ENCODE measurements at regions of chr3 and their contacts with region 1.

Region 1: GRCh38 chr3:56825567-56826438 is 24.1 kb upstream of the ARHGEF3 start:
- DNase-seq: no peak
- H3K4me3 ChIP-seq: no peak overlapping the region
- H3K4me3 Mint-ChIP-seq: peak overlapping the region in 2 of 8 donors; percentile 9 to 22
- H3K27ac ChIP-seq: no peak overlapping the region
- H3K27ac Mint-ChIP-seq: peak overlapping the region; percentile 0 to 88 (median 72)
- H3K4me1 ChIP-seq: peaks cover 45% of the 10 kb centered on the region
- H3K4me1 Mint-ChIP-seq: peaks cover 45 to 81% (median 47%) of the 10 kb centered on the region in 4 donors
- H3K27me3 ChIP-seq: no peaks in the 10 kb centered on the region
- H3K27me3 Mint-ChIP-seq: no peaks in the 10 kb centered on the region

Region 2: GRCh38 chr3:56629047-56629446 is 196.8 kb before region 1 on chr3:
- CTCF ChIA-PET with region 1: no interaction called
- POLR2A ChIA-PET with region 1: no interaction called
- intact Hi-C with region 1: no loop called
- DNase-seq: no peak
- H3K4me3 ChIP-seq: no peak overlapping the region
- H3K4me3 Mint-ChIP-seq: no peak overlapping the region
- H3K27ac ChIP-seq: no peak overlapping the region
- H3K27ac Mint-ChIP-seq: peak overlapping the region; percentile 57 to 81 (median 78)
- H3K4me1 ChIP-seq: no peaks in the 10 kb centered on the region
- H3K4me1 Mint-ChIP-seq: peaks cover 0 to 12% (median 5%) of the 10 kb centered on the region in 4 donors
- H3K27me3 ChIP-seq: no peaks in the 10 kb centered on the region
- H3K27me3 Mint-ChIP-seq: no peaks in the 10 kb centered on the region

Region 3: DNA sequence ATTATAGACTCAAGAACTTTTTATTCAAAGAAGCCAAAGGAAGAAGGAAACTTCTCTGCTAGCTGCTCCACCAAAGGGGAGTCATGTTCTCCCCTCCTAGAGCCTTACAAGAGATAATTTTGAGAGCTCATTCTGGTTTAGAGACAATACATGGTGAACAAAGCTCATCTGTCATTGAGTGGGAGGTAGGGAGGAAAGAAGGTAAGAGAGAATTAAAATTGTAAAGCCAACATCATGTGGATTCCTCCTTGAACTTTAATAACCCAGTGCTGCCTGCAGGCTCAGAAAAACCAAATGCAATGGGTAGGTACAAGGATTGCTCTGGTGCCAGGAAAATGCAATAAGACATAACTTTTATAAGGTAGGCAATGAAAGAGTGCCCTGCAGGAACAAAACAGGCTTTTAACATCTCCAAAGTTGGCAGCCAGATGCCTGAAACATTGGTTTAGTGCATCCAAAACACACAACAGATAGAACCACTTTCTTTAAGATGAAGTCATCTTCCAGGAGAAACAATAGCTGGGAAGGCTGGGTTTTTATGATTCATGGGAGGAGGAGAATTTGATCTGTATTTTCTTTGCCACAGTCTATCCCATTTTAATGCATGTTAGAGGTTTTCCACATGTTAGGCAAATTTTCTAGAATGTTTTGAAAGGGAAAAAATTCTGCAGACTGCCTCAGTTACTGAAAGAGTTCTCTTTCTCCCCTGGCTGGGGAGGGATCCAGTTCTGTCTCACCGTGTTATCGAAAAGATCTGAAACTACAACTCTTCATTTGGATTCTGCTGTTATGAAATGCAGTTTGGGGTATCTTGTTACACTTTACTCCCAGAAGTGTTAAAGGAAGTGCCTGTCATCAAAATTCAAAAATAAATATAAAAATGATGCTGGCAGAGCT is 12.8 kb before region 1 on chr3:
- CTCF ChIA-PET with region 1: interaction called, 30 read pairs
- POLR2A ChIA-PET with region 1: interaction called, 12 read pairs
- intact Hi-C with region 1: loop called (anchors 1 kb)
- DNase-seq: no peak
- H3K4me3 ChIP-seq: peak overlapping the region in 1 of 2 donors; percentile 27
- H3K4me3 Mint-ChIP-seq: peak overlapping the region; percentile 39 to 88 (median 73)
- H3K27ac ChIP-seq: peak overlapping the region; percentile 28
- H3K27ac Mint-ChIP-seq: peak overlapping the region; percentile 81 to 96 (median 88)
- H3K4me1 ChIP-seq: peaks cover 81% of the 10 kb centered on the region
- H3K4me1 Mint-ChIP-seq: peaks cover 67 to 85% (median 76%) of the 10 kb centered on the region in 4 donors
- H3K27me3 ChIP-seq: no peaks in the 10 kb centered on the region
- H3K27me3 Mint-ChIP-seq: no peaks in the 10 kb centered on the region

Region 4: GRCh38 chr3:56960234-56960917 is 134.6 kb after region 1 on chr3:
- CTCF ChIA-PET with region 1: no interaction called
- POLR2A ChIA-PET with region 1: no interaction called
- intact Hi-C with region 1: no loop called
- DNase-seq: no peak
- H3K4me3 ChIP-seq: no peak overlapping the region
- H3K4me3 Mint-ChIP-seq: peak overlapping the region in 1 of 8 donors; percentile 24
- H3K27ac ChIP-seq: no peak overlapping the region
- H3K27ac Mint-ChIP-seq: peak overlapping the region in 3 of 7 donors; percentile 5 to 38 (median 38)
- H3K4me1 ChIP-seq: no peaks in the 10 kb centered on the region
- H3K4me1 Mint-ChIP-seq: peaks cover 4 to 8% (median 8%) of the 10 kb centered on the region in 4 donors
- H3K27me3 ChIP-seq: no peaks in the 10 kb centered on the region
- H3K27me3 Mint-ChIP-seq: peaks cover 0 to 2% of the 10 kb centered on the region in 2 donors

Measured in CD4-positive, alpha-beta memory T cell (primary cell).